PC-9 (cell line): ENCODE measurements at regions of chr14 and their contacts with region 1.

Region 1: DNA sequence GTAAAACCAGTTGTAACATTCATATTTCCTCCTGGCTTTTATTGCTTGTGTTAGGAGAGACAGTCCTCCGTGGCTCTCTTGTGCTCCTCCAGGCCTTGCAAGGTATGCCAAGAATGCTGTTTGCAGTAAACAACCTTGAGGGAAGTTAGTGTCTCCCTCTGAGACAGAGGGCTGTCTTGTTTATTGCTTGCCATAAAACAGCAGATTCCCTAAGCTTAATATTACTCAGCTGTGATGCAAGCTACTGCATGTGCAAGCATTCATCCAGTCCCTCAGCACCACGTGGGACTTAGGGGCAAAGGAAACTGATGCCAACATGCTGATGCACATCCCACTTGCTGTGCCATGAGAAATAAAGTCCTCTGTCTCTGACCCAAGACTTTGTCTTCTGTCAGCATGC is 6.6 kb downstream of the POMT2 start:
- DNase-seq: peak in 1 of 2 experiments; percentile 83
- H3K4me3 ChIP-seq: no peak overlapping the region
- H3K27ac ChIP-seq: no peak overlapping the region
- H3K4me1 ChIP-seq: peaks cover 1% of the 10 kb centered on the region; the same call in 1 of the 2 replicates
- H3K27me3 ChIP-seq: no peaks in the 10 kb centered on the region
- CTCF ChIP-seq: 0 out of 2 replicates have a peak, but pooled peaks have one; percentile 9

Region 2: GRCh38 chr14:77151918-77152588 is 162.0 kb before region 1 on chr14:
- CTCF ChIA-PET with region 1: interaction called, 62 read pairs
- POLR2A ChIA-PET with region 1: interaction called, 4 read pairs
- intact Hi-C with region 1: loop called (anchors 1 kb)
- DNase-seq: peak; percentile 31 to 66
- H3K4me3 ChIP-seq: no peak overlapping the region
- H3K27ac ChIP-seq: no peak overlapping the region
- H3K4me1 ChIP-seq: no peaks in the 10 kb centered on the region
- H3K27me3 ChIP-seq: peaks cover 52% of the 10 kb centered on the region
- CTCF ChIP-seq: peak; percentile 70

Region 3: DNA sequence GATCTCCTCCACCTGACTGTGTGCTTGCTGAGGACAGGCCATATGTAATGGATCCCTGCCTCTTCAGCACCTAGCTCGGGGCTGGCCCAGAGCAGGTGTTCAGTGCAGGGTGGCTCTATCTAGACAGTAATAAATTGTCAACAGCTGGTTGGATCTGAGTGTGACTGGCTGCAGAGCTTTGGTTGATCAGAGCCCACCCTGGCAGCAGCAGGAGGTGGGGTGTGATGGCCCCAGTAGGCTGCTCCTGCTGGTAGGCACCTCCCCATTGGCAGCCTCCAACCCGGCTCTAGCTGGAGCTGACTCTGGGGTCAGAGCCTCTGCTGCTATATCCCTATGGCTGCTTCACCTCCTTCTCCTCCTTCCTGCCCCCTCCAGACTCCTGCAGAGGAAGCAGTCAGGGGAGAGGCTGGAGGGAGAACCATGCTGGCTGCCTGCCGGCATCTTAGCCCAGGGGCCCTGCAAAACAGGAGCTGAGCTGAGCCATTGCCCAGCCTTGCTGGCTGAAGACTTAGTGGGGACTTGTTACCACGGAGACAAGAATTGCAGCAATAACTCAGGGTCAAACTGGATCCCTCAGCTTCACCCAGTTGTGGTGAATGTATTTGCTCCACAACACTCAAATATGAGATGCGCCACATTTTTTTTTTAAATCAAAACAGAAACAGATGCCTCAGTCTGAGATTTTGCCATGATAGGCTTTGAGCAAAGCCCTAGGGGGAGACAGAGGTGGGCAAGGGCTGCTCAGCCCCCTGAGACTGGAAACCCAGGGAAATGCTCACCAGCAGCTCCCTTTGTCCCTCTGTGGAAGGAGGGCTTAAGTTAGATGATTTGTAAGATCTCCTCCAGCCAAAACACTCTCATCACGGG is 110.2 kb before region 1 on chr14:
- CTCF ChIA-PET with region 1: no interaction called
- POLR2A ChIA-PET with region 1: no interaction called
- intact Hi-C with region 1: no loop called
- DNase-seq: no peak
- H3K4me3 ChIP-seq: no peak overlapping the region
- H3K27ac ChIP-seq: no peak overlapping the region
- H3K4me1 ChIP-seq: no peaks in the 10 kb centered on the region
- H3K27me3 ChIP-seq: peaks cover 75% of the 10 kb centered on the region
- CTCF ChIP-seq: no peak

Region 4: DNA sequence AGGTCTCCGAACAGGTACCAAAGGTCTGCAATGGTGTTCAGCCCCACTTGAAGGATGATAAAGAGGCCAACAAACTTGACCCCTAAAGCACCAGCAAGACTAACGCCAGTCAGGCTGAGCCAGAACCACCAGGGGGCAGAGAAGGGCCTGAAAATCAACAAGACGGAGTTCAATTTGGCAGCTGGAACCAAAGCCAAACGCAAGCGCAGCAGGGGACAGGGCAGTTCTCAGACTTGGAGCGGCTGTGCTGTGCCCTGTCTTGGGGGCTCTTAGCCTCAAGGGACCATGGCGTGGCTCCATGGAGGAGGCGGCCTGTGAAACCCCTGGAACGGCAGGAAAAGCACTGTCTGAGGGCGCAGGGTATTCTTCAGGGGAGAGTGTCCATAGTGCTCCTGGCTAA is 12.9 kb before region 1 on chr14:
- CTCF ChIA-PET with region 1: interaction called, 51 read pairs
- POLR2A ChIA-PET with region 1: interaction called, 13 read pairs
- intact Hi-C with region 1: no loop called
- DNase-seq: peak in 1 of 2 experiments; percentile 49
- H3K4me3 ChIP-seq: no peak overlapping the region
- H3K27ac ChIP-seq: no peak overlapping the region
- H3K4me1 ChIP-seq: peaks cover 32% of the 10 kb centered on the region
- H3K27me3 ChIP-seq: no peaks in the 10 kb centered on the region
- CTCF ChIP-seq: peak; percentile 86

Region 5: GRCh38 chr14:77529963-77530362 is 215.9 kb after region 1 on chr14:
- CTCF ChIA-PET with region 1: interaction called, 13 read pairs
- POLR2A ChIA-PET with region 1: no interaction called
- intact Hi-C with region 1: no loop called
- DNase-seq: no peak
- H3K4me3 ChIP-seq: no peak overlapping the region
- H3K27ac ChIP-seq: no peak overlapping the region
- H3K4me1 ChIP-seq: no peaks in the 10 kb centered on the region
- H3K27me3 ChIP-seq: no peaks in the 10 kb centered on the region
- CTCF ChIP-seq: no peak

Region 6: GRCh38 chr14:77580964-77581505 is 267.0 kb after region 1 on chr14:
- CTCF ChIA-PET with region 1: interaction called, 12 read pairs
- POLR2A ChIA-PET with region 1: no interaction called
- intact Hi-C with region 1: no loop called
- DNase-seq: peak in 1 of 2 experiments; percentile 73
- H3K4me3 ChIP-seq: no peak overlapping the region
- H3K27ac ChIP-seq: peak overlapping the region; percentile 48
- H3K4me1 ChIP-seq: no peaks in the 10 kb centered on the region; the same call in 1 of the 2 replicates
- H3K27me3 ChIP-seq: no peaks in the 10 kb centered on the region
- CTCF ChIP-seq: no peak